Activated T-helper 1 cell treated with anti-CD3 and anti-CD28 coated beads, Interleukin-12 subunit alpha, Interleukin-12 subunit beta, Interleukin-2, Interleukin-4 antibody, amounts not matched to agents 30 ng/mL and 10 ng/mL and 1 ng/mL, durations not matched to agents 14 hours and 24 hours and 36 hours (primary cell): ENCODE measurements at regions of chr2 and their contacts with region 1.

Region 1: DNA sequence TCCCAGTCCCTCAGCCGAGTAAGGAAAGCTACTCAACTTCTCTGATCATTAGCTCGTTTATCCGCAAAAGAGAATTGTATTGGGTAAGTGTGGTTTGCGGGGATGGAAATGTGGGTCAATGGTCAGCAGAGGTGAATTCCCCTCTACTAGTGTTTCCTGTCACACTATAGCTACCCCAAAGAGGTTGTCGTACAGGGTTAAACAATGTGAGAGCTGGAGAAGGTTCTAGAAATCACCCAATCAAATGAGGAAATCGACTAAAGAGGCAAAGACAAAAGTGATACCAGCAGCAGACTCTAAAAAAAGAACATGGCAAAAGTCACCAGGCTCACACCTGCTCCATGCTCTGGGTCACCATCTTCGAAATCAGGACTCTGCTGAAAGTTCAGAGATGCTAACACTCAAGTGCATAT is 144.7 kb upstream of the ITGA4 start:
- DNase-seq: peak; percentile 44
- H3K4me3 Mint-ChIP-seq: peak overlapping the region; percentile 84
- H3K27ac Mint-ChIP-seq: peak overlapping the region; percentile 99
- H3K4me1 Mint-ChIP-seq: peaks cover 60% of the 10 kb centered on the region
- H3K27me3 Mint-ChIP-seq: no peaks in the 10 kb centered on the region

Region 2: GRCh38 chr2:181357979-181358378 is 45.5 kb after region 1 on chr2:
- intact Hi-C with region 1: loop called (anchors 2 kb)
- DNase-seq: no peak
- H3K4me3 Mint-ChIP-seq: no peak overlapping the region
- H3K27ac Mint-ChIP-seq: no peak overlapping the region
- H3K4me1 Mint-ChIP-seq: peaks cover 18% of the 10 kb centered on the region
- H3K27me3 Mint-ChIP-seq: no peaks in the 10 kb centered on the region